GM10248 (cell line): ENCODE measurements at regions of chr14 and their contacts with region 1.

Region 1: DNA sequence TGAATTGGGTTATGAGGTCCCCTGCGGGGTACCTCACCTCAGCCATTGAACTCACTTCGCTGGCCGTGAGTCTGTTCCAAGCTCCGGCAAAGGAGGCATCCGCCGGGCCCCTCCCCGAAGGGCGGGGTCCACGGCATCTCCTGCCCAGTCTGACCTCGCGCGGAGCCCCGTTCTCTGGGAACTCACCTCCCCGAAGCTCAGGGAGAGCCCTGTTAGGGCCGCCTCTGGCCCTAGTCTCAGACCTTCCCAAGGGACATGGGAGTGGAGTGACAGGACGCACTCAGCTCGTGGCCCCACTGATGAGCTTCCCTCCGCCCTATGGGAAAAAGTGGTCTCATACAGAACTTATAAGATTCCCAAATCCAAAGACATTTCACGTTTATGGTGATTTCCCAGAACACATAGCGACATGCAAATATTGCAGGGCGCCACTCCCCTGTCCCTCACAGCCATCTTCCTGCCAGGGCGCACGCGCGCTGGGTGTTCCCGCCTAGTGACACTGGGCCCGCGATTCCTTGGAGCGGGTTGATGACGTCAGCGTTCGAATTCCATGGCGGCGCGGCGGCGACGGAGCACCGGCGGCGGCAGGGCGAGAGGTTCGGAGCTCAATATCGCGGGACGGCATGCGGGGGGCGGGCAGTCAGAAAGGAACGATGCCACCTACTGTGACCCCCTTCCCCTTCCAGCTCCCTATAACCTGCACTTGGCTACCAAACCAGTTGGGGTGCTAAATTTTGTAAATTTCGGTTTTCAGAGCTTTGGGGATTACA is at the start of gene PARP2:
- DNase-seq: peak; percentile 93
- CTCF ChIP-seq: no peak

Region 2: GRCh38 chr14:20007497-20007896 is 335.8 kb before region 1 on chr14:
- CTCF ChIA-PET with region 1: no interaction called
- POLR2A ChIA-PET with region 1: no interaction called
- DNase-seq: no peak
- CTCF ChIP-seq: no peak

Region 3: GRCh38 chr14:20332788-20333493 is 10.3 kb before region 1 on chr14 and contains the start of gene CCNB1IP1:
- CTCF ChIA-PET with region 1: interaction called, 45 read pairs
- POLR2A ChIA-PET with region 1: interaction called, 21 read pairs
- DNase-seq: peak; percentile 90
- CTCF ChIP-seq: no peak

Region 4: DNA sequence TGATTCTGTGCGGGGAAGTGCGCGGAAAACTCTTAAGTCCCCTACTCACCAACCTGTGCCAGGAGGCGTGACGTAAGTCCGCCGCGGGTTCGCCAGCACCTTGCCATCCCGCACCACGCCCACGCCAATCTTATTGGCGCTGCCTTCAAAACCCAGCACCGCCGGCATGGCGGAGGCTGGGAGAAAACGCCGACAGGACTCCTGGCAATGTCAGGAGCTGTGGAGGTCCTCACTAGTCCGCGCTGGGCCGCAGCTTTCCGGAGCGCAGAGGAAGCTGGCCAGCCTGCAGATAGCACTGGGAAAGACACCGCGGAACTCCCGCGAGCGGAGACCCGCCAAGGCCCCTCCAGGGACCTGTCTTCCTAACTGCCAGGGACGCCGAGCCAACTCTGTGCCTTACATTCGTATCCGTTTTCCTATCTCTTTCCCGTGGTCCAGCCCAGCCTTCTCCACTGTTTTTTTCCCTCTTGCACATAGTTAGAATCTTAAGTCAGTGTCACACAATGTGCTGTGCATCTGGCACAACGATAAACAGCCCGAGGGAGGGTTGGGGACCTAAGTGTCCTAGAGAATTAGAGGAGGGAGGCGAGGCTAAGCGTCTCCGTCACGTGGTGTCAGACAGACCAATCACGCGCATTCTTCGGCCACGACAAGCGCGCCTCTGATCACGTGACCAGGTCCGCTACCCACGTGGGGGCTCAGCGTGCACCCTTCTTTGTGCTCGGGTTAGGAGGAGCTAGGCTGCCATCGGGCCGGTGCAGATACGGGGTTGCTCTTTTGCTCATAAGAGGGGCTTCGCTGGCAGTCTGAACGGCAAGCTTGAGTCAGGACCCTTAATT is 111.5 kb after region 1 on chr14 and contains the starts of genes APEX1 and OSGEP:
- CTCF ChIA-PET with region 1: interaction called, 3 read pairs
- POLR2A ChIA-PET with region 1: interaction called, 13 read pairs
- DNase-seq: peak; percentile 96
- CTCF ChIP-seq: no peak

Region 5: DNA sequence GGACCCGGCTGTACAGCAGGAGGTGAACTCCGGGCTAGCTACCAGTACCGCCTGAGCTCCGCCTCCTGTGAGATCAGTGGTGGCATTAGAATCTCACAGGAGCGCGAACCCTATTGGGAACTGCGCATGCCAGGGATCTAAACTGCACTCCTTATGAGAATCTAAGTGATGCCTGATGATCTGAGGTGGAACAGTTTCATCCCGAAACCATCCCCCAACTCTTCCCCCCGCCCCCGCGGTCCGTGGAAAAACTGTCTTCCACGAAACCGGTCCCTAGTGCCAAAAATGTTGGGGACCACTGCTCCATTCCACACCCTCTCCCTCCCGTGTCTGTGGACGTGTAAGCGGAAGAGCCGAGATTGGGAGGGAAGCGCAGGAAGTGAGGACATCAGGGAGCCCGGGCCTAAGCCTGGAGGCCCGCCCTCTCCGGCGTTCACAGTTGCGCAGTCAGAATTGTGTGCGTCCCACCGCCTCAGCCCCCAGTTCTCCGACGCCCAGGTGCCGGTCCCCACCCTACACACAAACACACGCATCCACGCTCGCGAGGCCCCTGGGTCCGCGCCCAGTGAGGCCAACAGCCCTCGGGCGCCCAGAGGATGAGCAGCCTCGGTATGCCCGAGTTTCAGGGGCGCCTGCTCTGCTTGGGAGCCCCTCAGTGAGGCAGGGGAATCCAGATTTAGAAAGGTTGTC is 339.3 kb after region 1 on chr14:
- CTCF ChIA-PET with region 1: no interaction called
- POLR2A ChIA-PET with region 1: interaction called, 13 read pairs
- DNase-seq: peak; percentile 84
- CTCF ChIP-seq: no peak